ENCODE measurements at regions of chr7 and their contacts with region 1.

Region 1: DNA sequence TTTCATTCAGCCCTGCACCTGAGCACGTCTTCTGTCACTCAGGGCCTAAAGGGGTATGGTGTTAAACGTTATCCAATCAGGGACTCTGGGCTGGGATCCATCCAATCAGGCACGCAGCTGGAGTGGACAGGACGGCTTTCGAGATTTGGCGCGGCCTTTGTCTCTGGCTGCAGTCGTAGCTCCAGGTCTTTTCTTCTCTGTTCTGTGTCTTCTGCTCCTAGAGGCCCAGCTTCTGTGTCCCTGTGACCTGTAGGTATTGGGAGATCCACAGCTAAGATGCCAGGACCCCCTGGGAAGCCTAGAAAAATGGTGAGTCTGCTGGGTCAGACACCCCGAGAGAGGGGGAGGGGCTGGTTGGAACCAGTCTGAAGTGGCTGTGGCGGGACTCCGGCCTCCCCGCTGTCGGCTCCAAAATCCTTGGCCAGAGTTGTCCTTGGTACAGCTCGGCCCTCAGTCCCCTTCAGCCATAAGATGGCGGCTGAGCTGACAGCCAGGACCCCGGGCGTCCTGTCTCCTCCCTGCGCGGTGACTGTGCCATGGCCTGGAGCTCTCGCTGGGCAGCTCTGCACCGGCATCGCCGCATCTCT is 11.8 kb upstream of the ZNF680 start:
- DNase-seq: peak; percentile 62 to 78
- ATAC-seq: peak; percentile 80 to 94 (median 88)
- H3K4me3 ChIP-seq: peak overlapping the region; percentile 18 to 58 (median 50)
- H3K27ac ChIP-seq: no peak overlapping the region
- H3K4me1 ChIP-seq: peaks cover 0 to 9% (median 2%) of the 10 kb centered on the region in 9 donors
- H3K27me3 ChIP-seq: peaks cover 0 to 15% (median under 1%) of the 10 kb centered on the region in 7 donors
- CTCF ChIP-seq: no peak

Region 2: DNA sequence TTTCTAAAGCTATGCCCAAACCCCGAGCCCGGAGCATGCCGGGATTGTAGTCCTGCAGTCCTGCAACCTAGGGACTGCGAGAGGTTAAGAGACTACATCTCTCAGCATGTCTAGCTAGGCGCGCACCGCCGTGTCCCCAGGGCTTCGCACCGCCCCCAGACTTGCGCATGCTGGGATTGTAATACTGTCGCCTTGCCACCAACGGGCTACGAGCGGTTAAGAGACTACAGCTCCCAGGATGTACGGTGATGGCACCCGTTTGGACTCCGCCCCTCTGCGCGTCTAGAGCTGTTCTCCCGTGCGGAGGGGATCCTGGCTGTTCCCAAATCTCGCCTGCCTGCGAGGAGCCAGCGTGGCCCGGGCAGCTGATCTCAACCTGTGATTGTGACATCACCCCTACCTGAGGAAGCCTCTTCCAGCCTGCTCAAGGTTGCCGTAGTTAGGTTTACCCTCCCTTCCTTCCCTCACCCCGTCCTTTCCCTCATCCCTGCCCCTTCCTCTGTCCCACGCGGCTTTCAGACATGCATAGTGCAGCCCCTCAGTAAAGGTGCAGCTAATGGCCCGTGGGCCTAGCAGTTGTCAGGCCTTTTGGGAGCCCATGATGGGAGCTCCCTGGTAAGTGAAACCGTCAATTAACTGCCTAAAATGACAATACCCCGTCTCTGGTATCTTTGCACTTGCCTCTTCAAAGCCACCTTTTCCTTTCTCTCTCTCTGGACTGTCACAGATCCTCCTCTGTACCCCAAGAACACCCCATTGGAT is 267.2 kb before region 1 on chr7:
- intact Hi-C with region 1: loop called in 3 of 10 experiments (anchors 10 kb)
- DNase-seq: peak; percentile 91 to 92
- ATAC-seq: peak; percentile 96 to 100 (median 98)
- H3K4me3 ChIP-seq: peak overlapping the region; percentile 27 to 68 (median 62)
- H3K27ac ChIP-seq: peak overlapping the region; percentile 54 to 91 (median 81)
- H3K4me1 ChIP-seq: peaks cover 0 to 15% (median 6%) of the 10 kb centered on the region in 9 donors
- H3K27me3 ChIP-seq: no peaks in the 10 kb centered on the region
- CTCF ChIP-seq: peak in 1 of 9 donors; percentile 24

Region 3: GRCh38 chr7:64463636-64464378 is 110.8 kb before region 1 on chr7:
- intact Hi-C with region 1: loop called in 2 of 10 experiments (anchors 10 kb)
- DNase-seq: peak; percentile 74 to 85
- ATAC-seq: peak; percentile 97 to 100 (median 100)
- H3K4me3 ChIP-seq: peak overlapping the region; percentile 39 to 71 (median 56)
- H3K27ac ChIP-seq: peak overlapping the region in 4 of 10 donors; percentile 19 to 51 (median 32)
- H3K4me1 ChIP-seq: no peaks in the 10 kb centered on the region
- H3K27me3 ChIP-seq: no peaks in the 10 kb centered on the region
- CTCF ChIP-seq: no peak

Region 4: GRCh38 chr7:64494912-64495461 is 79.6 kb before region 1 on chr7:
- intact Hi-C with region 1: loop called in 1 of 10 experiments (anchors 5 kb)
- DNase-seq: no peak
- ATAC-seq: peak in 7 of 8 donors; percentile 29 to 79 (median 53)
- H3K4me3 ChIP-seq: peak overlapping the region in 4 of 10 donors; percentile 28 to 43 (median 31)
- H3K27ac ChIP-seq: no peak overlapping the region
- H3K4me1 ChIP-seq: peaks cover 0 to 9% (median 0%) of the 10 kb centered on the region in 9 donors
- H3K27me3 ChIP-seq: no peaks in the 10 kb centered on the region
- CTCF ChIP-seq: no peak

Region 5: DNA sequence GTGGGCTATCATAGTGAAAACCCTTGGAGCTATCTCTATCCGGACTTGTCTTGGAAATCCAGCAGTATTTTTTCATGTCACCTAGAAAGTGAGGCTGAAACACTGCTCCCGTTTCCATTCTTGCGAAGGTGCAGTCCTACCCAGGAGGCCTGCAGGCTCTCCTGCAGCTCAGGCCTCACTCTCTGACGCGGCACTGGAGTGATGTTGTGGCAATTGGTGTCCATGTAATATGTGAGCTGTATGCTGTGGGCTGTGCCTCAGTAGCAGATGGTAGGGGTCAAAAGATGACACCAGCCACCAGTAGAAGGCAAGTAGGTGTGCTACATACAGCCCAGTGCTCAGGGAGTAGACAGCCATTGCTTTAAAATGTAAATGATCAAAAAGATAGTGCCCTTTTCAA is 16.3 kb after region 1 on chr7:
- intact Hi-C with region 1: no loop called
- DNase-seq: no peak
- ATAC-seq: no peak
- H3K4me3 ChIP-seq: no peak overlapping the region
- H3K27ac ChIP-seq: no peak overlapping the region
- H3K4me1 ChIP-seq: no peaks in the 10 kb centered on the region
- H3K27me3 ChIP-seq: no peaks in the 10 kb centered on the region
- CTCF ChIP-seq: no peak

Region 6: DNA sequence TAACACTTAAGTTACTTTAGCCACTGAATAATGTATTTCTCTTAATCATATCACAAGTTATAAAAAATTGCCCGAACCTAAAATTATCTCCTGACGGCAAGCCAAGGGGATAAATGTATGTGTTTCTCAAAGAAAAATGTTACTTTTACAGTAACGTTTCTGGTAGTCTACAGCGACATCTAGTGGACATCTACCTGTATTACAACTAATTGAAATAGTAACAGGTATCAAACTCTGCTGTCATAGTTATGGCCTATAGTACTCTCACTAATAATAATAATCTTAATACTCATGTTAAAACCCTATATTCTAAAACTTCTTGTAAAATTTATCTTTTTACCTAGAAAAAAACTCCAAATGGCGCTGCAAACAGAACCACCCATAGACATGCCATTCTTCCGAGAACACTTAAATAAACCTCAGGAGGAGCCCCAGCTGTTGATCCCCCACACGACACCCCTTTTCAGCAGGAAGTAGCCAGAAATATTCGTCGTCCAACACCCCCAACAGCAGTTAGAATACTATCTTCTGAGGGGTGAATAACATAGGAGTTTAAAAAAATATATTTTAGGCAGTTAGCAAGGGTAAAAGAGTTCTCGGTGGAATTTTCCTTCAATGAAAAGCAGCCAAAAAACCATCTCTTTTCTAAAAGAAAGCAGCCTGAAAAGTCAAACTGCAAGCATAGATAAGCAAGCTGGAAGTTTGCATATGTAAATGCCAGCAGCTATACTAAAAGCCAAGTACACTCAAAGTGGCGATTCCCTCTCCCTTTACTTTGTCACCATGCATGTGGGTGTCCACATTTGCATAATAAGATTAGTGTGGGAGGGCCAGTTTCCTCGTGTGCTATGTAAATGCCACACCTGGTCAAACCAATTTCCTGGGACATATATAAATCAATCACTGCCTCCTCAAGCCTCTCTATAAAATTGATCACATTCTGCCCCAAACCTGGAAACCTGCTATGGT is 50.8 kb after region 1 on chr7:
- intact Hi-C with region 1: no loop called
- DNase-seq: no peak
- ATAC-seq: no peak
- H3K4me3 ChIP-seq: no peak overlapping the region
- H3K27ac ChIP-seq: no peak overlapping the region
- H3K4me1 ChIP-seq: no peaks in the 10 kb centered on the region
- H3K27me3 ChIP-seq: peaks cover 0 to 21% (median 0%) of the 10 kb centered on the region in 7 donors
- CTCF ChIP-seq: peak; percentile 75 to 89 (median 84)

Measured in heart right ventricle (tissue), 16 donors.